CD8-positive, alpha-beta memory T cell (primary cell): ENCODE measurements at regions of chr11 and their contacts with region 1.

Region 1: DNA sequence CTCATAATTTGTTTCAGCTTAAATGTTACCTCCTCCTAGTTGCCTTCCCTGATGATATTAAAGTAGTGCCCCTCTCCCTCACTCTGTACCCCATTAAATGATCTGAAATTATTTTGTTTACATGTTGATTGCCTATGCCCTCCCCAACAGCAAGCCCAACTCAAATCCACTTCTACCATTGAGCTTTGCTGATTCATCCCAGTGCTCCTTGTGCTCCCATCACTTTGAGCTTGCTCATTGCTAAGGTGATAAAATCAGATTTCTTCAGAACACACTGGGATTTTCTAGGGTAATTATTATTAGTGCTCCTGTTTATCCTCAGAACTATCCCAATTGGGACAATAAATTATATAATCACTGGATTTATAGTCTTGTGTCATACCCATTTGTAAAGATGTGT is 8.4 kb upstream of the DDX6 start:
- DNase-seq: no peak
- H3K4me3 ChIP-seq: no peak overlapping the region
- H3K4me3 Mint-ChIP-seq: no peak overlapping the region
- H3K27ac ChIP-seq: no peak overlapping the region
- H3K27ac Mint-ChIP-seq: peak overlapping the region in 2 of 8 donors; percentile 4 to 10
- H3K4me1 ChIP-seq: no peaks in the 10 kb centered on the region
- H3K4me1 Mint-ChIP-seq: no peaks in the 10 kb centered on the region
- H3K27me3 ChIP-seq: no peaks in the 10 kb centered on the region
- H3K27me3 Mint-ChIP-seq: no peaks in the 10 kb centered on the region

Region 2: DNA sequence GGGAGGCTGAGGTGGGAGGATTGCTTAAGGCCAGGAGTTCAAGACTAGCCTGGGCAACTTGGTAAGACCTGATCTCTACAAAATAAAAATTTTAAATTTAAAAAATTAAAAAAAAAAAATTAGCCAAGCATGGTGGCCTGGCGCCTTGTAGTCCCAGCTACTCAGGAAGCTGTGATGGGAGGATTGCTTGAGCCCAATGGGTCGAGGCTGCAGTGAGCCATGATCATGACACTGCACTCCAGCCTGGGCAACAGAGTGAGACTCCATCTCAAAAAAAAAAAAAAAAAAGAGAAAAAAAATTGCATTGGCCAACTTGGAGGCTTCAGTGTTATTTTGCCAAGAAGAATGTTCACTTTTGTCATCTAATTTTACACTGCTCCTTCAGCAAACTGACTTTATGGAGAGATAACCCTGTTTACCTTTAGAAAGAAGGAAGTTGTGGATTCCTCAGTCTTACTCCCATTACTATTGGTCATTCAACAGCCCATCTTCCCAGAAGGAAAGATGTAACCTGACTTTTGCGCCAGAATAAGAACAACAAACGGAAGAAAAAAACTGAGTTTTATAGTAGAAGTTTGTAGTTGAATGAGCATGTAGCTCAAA is 350.0 kb before region 1 on chr11:
- CTCF ChIA-PET with region 1: no interaction called
- POLR2A ChIA-PET with region 1: no interaction called
- DNase-seq: no peak
- H3K4me3 ChIP-seq: no peak overlapping the region
- H3K4me3 Mint-ChIP-seq: peak overlapping the region in 1 of 7 donors; percentile 57
- H3K27ac ChIP-seq: no peak overlapping the region
- H3K27ac Mint-ChIP-seq: peak overlapping the region in 6 of 8 donors; percentile 21 to 73 (median 54)
- H3K4me1 ChIP-seq: peaks cover 43% of the 10 kb centered on the region
- H3K4me1 Mint-ChIP-seq: peaks cover 68 to 83% (median 82%) of the 10 kb centered on the region in 3 donors
- H3K27me3 ChIP-seq: no peaks in the 10 kb centered on the region
- H3K27me3 Mint-ChIP-seq: no peaks in the 10 kb centered on the region

Region 3: GRCh38 chr11:118785362-118785761 is 14.0 kb before region 1 on chr11:
- CTCF ChIA-PET with region 1: interaction called, 3 read pairs
- POLR2A ChIA-PET with region 1: interaction called, 10 read pairs
- DNase-seq: no peak
- H3K4me3 ChIP-seq: peak overlapping the region; percentile 46
- H3K4me3 Mint-ChIP-seq: peak overlapping the region; percentile 51 to 100 (median 79)
- H3K27ac ChIP-seq: no peak overlapping the region
- H3K27ac Mint-ChIP-seq: peak overlapping the region in 7 of 8 donors; percentile 3 to 99 (median 73)
- H3K4me1 ChIP-seq: peaks cover 70% of the 10 kb centered on the region
- H3K4me1 Mint-ChIP-seq: peaks cover 53 to 75% (median 65%) of the 10 kb centered on the region in 3 donors
- H3K27me3 ChIP-seq: no peaks in the 10 kb centered on the region
- H3K27me3 Mint-ChIP-seq: no peaks in the 10 kb centered on the region

Region 4: GRCh38 chr11:118856314-118856713 is 56.9 kb after region 1 on chr11:
- CTCF ChIA-PET with region 1: no interaction called
- POLR2A ChIA-PET with region 1: no interaction called
- DNase-seq: no peak
- H3K4me3 ChIP-seq: no peak overlapping the region
- H3K4me3 Mint-ChIP-seq: no peak overlapping the region
- H3K27ac ChIP-seq: no peak overlapping the region
- H3K27ac Mint-ChIP-seq: peak overlapping the region in 1 of 8 donors; percentile 12
- H3K4me1 ChIP-seq: no peaks in the 10 kb centered on the region
- H3K4me1 Mint-ChIP-seq: peaks cover 8 to 24% (median 12%) of the 10 kb centered on the region in 3 donors
- H3K27me3 ChIP-seq: no peaks in the 10 kb centered on the region
- H3K27me3 Mint-ChIP-seq: no peaks in the 10 kb centered on the region